ENCODE measurements at regions of chr15 and their contacts with region 1.

Region 1: GRCh38 chr15:79989682-79990081 is 18.7 kb upstream of the BCL2A1 start:
- DNase-seq: no peak
- ATAC-seq: peak; percentile 29; the same call in 1 of the 3 replicates
- H3K4me3 ChIP-seq: no peak overlapping the region
- H3K27ac ChIP-seq: no peak overlapping the region
- H3K4me1 ChIP-seq: no peaks in the 10 kb centered on the region; a peak in 2 of 5 replicates
- H3K27me3 ChIP-seq: no peaks in the 10 kb centered on the region
- CTCF ChIP-seq: no peak
- EP300 ChIP-seq: no peak
- POLR2A ChIP-seq: no peak
- RAD21 ChIP-seq: no peak

Region 2: DNA sequence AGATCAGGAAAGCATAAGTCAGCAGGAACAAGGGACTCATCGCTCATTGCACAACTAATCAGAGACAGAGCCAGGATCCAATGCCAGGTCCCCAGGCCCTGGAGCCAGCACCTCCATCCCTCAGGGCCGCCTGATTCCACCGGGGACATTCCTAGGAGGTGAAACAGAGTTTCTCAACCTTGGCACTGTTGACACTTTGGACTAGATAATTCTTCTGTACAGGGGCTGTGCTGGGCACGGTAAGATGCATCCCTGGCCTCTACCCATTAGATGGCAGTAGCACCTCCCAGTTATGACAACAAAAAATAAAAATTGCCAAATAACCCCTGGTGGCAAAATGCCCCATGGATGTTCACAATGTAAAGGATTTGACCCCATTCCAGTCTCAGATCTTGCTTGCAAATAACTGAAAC is 220.6 kb before region 1 on chr15:
- CTCF ChIA-PET with region 1: no interaction called
- POLR2A ChIA-PET with region 1: no interaction called
- in situ Hi-C with region 1: no loop called
- intact Hi-C with region 1: loop called (anchors 1 kb)
- DNase-seq: peak in 1 of 4 experiments; percentile 12
- ATAC-seq: peak; percentile 55; the same call in 2 of the 3 replicates
- H3K4me3 ChIP-seq: no peak overlapping the region
- H3K27ac ChIP-seq: no peak overlapping the region
- H3K4me1 ChIP-seq: no peaks in the 10 kb centered on the region
- H3K27me3 ChIP-seq: peaks cover 3 to 21% of the 10 kb centered on the region in 2 experiments; a peak in 4 of 5 replicates
- CTCF ChIP-seq: peak; percentile 36 to 60 (median 60); a peak in 4 of 6 replicates
- EP300 ChIP-seq: no peak
- POLR2A ChIP-seq: no peak
- RAD21 ChIP-seq: peak in 1 of 2 experiments; percentile 59; a peak in 2 of 4 replicates

Region 3: DNA sequence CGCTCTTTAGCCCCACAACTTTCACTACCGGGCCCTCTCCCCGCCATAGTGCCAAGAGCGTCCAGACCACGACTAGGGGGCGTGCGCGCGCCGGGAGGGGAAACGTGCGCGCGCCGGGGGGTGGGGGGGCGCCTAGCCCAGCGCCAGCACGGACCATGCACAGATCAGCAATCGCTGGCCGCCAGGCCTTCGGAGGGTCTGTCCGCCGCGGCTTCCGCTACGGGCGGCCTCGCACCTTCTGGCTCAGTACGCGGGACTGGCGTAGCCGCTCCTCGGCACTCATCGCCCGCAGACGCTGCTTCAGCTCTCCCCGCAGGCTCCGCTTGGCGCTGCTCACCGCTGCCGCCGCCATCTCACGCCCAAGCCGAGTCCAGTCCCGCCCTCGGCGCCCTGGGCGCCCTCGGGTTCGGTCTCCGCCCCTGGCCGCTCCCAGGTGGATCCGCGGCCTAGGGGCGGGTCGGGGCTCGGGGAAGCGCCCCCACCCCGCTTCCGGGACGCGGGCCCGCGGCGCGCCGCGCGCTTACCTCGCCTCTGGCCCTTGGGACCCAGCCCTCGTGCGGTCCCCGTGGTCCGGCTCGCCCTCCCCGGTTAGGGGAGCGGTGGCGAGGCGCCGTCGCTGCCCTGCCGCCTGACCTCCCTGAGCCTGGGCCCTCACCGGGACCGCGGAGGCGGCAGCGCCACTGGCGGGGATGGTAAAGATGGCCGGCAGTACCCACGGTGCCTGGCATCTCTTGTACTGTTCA is 92.9 kb before region 1 on chr15 and contains the start of gene MTHFS:
- CTCF ChIA-PET with region 1: interaction called, 10 read pairs
- POLR2A ChIA-PET with region 1: no interaction called
- in situ Hi-C with region 1: loop called (anchors 5 kb)
- intact Hi-C with region 1: loop called (anchors 1 kb)
- DNase-seq: peak; percentile 89 to 93 (median 92)
- ATAC-seq: peak; percentile 98
- H3K4me3 ChIP-seq: peak within 1 kb of the TSS; percentile 69
- H3K27ac ChIP-seq: peak within 1 kb of the TSS; percentile 93
- H3K4me1 ChIP-seq: peaks cover 3 to 8% of the 10 kb centered on the region in 2 experiments
- H3K27me3 ChIP-seq: no peaks in the 10 kb centered on the region
- CTCF ChIP-seq: peak; percentile 41 to 60 (median 49); a peak in 5 of 6 replicates
- EP300 ChIP-seq: no peak
- POLR2A ChIP-seq: peak; percentile 97
- RAD21 ChIP-seq: peak; percentile 35 to 41
- polyA plus RNA-seq, gene MTHFS: 17.8 to 23.6 TPM

Region 4: DNA sequence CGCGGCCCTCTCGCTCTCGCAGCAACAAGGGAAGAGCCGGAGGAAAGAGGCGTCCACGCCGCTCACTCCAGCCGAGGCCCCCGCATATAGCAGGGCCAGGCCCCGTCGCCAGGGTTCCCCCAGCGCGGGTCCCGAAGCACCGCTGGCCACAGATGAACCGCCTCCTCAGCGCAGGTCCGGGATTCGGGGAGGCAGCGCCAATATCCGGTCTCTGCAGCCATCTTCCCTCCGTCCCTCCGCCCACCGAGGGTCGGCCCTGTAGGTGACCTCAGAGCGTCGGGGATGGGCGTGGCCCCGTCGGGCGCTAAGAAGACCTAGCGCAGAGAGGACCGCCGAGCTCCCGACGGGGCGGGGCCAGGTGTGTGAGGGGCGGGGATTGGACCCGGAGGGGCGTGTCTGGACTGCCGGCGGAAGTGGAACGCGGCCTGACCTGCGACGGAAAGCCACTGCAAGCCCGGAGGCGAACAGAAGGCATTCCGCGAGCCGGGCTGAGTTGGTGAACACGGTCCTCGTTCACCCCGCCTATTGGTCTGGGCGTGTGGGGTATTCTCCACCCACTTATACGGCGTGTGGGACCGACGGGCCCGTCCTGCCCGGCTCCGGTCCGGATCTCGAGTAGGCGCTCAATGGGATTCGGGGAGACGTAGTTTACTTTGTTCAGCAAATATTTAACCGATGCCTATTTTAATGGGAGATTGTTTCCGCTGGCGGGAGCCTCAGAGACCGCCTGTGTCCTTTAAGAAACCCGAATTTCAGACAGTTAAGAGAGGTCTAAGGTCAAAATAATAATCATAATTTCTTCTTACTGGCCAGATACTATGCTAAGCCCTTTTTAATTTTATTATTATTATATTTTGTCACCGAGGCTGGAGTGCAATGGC is 65.9 kb before region 1 on chr15:
- CTCF ChIA-PET with region 1: no interaction called
- POLR2A ChIA-PET with region 1: no interaction called
- in situ Hi-C with region 1: no loop called
- intact Hi-C with region 1: loop called (anchors 5 kb)
- DNase-seq: peak; percentile 96 to 98 (median 98)
- ATAC-seq: peak; percentile 97
- H3K4me3 ChIP-seq: peak overlapping the region; percentile 93
- H3K27ac ChIP-seq: peak overlapping the region; percentile 91
- H3K4me1 ChIP-seq: peaks cover 10 to 17% of the 10 kb centered on the region in 2 experiments; a peak in 4 of 5 replicates
- H3K27me3 ChIP-seq: no peaks in the 10 kb centered on the region
- CTCF ChIP-seq: no peak
- EP300 ChIP-seq: no peak
- POLR2A ChIP-seq: peak; percentile 91
- RAD21 ChIP-seq: no peak